ENCODE measurements at regions of chr18 and their contacts with region 1.

Region 1: GRCh38 chr18:23356915-23357601 is 96.0 kb upstream of the RIOK3 start:
- DNase-seq: no peak
- ATAC-seq: no peak
- H3K4me3 ChIP-seq: no peak overlapping the region
- H3K4me3 Mint-ChIP-seq: no peak overlapping the region
- H3K27ac ChIP-seq: no peak overlapping the region
- H3K27ac Mint-ChIP-seq: no peak overlapping the region
- H3K4me1 ChIP-seq: peaks cover 0 to 17% of the 10 kb centered on the region in 2 experiments
- H3K4me1 Mint-ChIP-seq: peaks cover 10 to 17% (median 16%) of the 10 kb centered on the region in 3 donors
- H3K27me3 ChIP-seq: no peaks in the 10 kb centered on the region
- H3K27me3 Mint-ChIP-seq: no peaks in the 10 kb centered on the region

Region 2: DNA sequence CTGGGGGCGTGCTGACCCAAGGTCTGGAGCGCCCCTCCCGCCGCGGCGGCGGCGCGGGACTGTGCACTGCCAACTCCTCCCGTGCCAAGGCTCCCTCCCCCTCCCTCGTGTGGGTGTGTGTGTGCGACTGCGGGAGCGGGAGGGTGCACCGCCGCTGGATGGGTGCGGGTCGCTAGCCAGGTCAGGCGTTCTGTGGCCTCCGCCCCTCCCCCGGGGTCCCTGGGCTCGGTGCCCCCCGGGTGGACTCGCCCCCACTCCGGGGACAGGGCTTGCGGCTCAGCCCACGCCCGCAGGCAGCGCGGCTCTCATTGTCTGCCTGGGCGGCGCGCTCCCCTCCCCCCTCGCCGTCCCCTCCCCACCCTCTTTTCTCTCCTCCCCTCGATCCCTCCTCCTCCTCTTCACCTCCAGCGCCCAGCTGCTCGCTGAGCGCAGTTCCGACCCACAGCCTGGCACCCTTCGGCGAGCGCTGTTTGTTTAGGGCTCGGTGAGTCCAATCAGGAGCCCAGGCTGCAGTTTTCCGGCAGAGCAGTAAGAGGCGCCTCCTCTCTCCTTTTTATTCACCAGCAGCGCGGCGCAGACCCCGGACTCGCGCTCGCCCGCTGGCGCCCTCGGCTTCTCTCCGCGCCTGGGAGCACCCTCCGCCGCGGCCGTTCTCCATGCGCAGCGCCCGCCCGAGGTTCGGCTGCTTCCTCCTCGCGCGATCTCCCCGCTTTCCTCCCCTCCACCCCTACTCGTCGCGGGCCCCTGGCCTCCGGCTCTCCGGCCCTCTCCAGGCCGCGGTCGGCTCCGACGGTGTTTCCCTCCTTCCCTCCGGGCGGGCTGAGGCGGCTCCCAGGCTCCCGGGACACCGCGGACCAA is 1187.8 kb before region 1 on chr18 and contains the start of gene GATA6:
- CTCF ChIA-PET with region 1: no interaction called
- POLR2A ChIA-PET with region 1: no interaction called
- DNase-seq: peak in 23 of 35 experiments; percentile 9 to 67 (median 30)
- ATAC-seq: peak; percentile 39 to 76 (median 60)
- H3K4me3 ChIP-seq: peak within 1 kb of the TSS; percentile 55 to 60
- H3K4me3 Mint-ChIP-seq: peak within 1 kb of the TSS; percentile 82 to 87 (median 85)
- H3K27ac ChIP-seq: no peak within 1 kb of the TSS
- H3K27ac Mint-ChIP-seq: peak within 1 kb of the TSS in 1 of 2 donors; percentile 46
- H3K4me1 ChIP-seq: peaks cover 5 to 60% of the 10 kb centered on the region in 2 experiments
- H3K4me1 Mint-ChIP-seq: peaks cover 6 to 28% (median 25%) of the 10 kb centered on the region in 3 donors
- H3K27me3 ChIP-seq: peaks cover 29 to 91% of the 10 kb centered on the region in 2 experiments
- H3K27me3 Mint-ChIP-seq: peaks cover 51 to 72% of the 10 kb centered on the region in 2 donors
- total RNA-seq, gene GATA6: 0.13 to 0.96 (median 0.59) TPM

Region 3: DNA sequence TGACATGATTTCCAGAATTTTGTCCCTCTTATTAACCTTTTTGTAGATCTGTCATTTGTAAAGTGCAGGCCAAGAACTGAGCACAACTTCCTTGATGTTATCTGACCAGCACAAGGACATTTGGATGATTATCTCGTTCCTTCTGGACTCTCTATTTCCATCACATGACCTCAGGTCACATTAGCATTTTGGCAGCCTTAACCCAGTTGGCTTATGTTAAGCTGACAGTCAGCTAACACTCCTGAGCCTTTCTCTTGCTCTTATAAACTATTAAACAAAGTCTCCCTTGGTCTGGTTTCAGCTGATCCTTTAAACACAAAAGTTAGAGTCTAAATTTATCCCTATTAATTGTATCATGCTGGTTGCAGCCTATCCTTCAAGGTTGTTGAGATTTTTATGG is 591.2 kb before region 1 on chr18:
- CTCF ChIA-PET with region 1: no interaction called
- POLR2A ChIA-PET with region 1: no interaction called
- DNase-seq: no peak
- ATAC-seq: no peak
- H3K4me3 ChIP-seq: no peak overlapping the region
- H3K4me3 Mint-ChIP-seq: no peak overlapping the region
- H3K27ac ChIP-seq: no peak overlapping the region
- H3K27ac Mint-ChIP-seq: no peak overlapping the region
- H3K4me1 ChIP-seq: no peaks in the 10 kb centered on the region
- H3K4me1 Mint-ChIP-seq: no peaks in the 10 kb centered on the region
- H3K27me3 ChIP-seq: no peaks in the 10 kb centered on the region
- H3K27me3 Mint-ChIP-seq: peaks cover 20 to 35% of the 10 kb centered on the region in 2 donors

Region 4: GRCh38 chr18:23586249-23587196 is 229.5 kb after region 1 on chr18 and contains the start of gene NPC1:
- CTCF ChIA-PET with region 1: interaction called in 1 of 2 experiments, 12 read pairs
- POLR2A ChIA-PET with region 1: no interaction called
- DNase-seq: peak; percentile 82 to 95 (median 89)
- ATAC-seq: peak; percentile 92 to 94 (median 93)
- H3K4me3 ChIP-seq: peak within 1 kb of the TSS; percentile 92 to 94
- H3K4me3 Mint-ChIP-seq: peak within 1 kb of the TSS; percentile 89 to 92 (median 91)
- H3K27ac ChIP-seq: peak within 1 kb of the TSS; percentile 98
- H3K27ac Mint-ChIP-seq: peak within 1 kb of the TSS; percentile 89 to 94
- H3K4me1 ChIP-seq: peaks cover 5 to 38% of the 10 kb centered on the region in 2 experiments
- H3K4me1 Mint-ChIP-seq: peaks cover 31 to 44% (median 40%) of the 10 kb centered on the region in 3 donors
- H3K27me3 ChIP-seq: no peaks in the 10 kb centered on the region
- H3K27me3 Mint-ChIP-seq: no peaks in the 10 kb centered on the region
- total RNA-seq, gene NPC1: 35.2 to 52.7 (median 39.4) TPM

Region 5: DNA sequence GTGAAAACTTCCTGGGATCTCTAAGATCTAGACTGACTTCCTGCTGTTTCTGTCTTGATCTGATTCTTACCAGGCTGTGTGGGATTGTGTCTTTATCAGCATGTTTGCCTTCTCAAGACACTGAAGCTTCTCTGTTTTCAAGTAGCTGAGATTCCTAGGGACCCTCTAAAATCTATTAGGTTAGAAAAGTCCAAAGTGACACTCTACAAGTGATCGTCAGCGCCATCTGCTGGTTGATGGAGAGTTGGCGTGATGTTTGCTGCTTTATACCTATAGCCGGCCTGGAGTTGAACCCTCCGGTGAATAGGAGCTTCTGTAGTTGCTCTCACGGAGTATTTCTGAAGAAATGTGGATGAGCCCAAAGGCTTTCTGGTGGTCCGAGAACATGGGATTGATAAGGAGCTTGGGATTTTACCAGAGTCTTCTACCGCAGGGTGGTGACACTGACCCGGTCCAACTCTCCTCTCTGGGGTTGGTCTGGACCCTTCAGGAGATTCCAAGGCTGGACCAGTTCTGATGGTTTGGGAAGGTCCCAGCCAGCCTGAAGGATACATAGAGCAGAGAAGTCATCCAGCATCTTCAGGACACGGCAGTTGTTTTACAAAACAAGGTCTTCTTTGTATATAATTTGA is 561.5 kb after region 1 on chr18:
- CTCF ChIA-PET with region 1: interaction called in 1 of 2 experiments, 12 read pairs
- POLR2A ChIA-PET with region 1: no interaction called
- DNase-seq: peak; percentile 35 to 89 (median 71)
- ATAC-seq: peak; percentile 69 to 81 (median 75)
- H3K4me3 ChIP-seq: no peak overlapping the region
- H3K4me3 Mint-ChIP-seq: no peak overlapping the region
- H3K27ac ChIP-seq: no peak overlapping the region
- H3K27ac Mint-ChIP-seq: no peak overlapping the region
- H3K4me1 ChIP-seq: peaks cover 13 to 17% of the 10 kb centered on the region in 2 experiments
- H3K4me1 Mint-ChIP-seq: peaks cover 26 to 35% (median 33%) of the 10 kb centered on the region in 3 donors
- H3K27me3 ChIP-seq: no peaks in the 10 kb centered on the region
- H3K27me3 Mint-ChIP-seq: no peaks in the 10 kb centered on the region